Activated CD4-positive, alpha-beta T cell treated with anti-CD3 and anti-CD28 coated beads, Interleukin-2, amount 10 ng/mL, durations not matched to agents 7 days and 5 days (primary cell): ENCODE measurements at regions of chr16 and their contacts with region 1.

Region 1: GRCh38 chr16:50326949-50327402 is 41.8 kb downstream of the BRD7 start:
- DNase-seq: peak; percentile 87
- H3K4me3 Mint-ChIP-seq: no peak overlapping the region
- H3K27ac Mint-ChIP-seq: peak overlapping the region; percentile 81
- H3K4me1 Mint-ChIP-seq: peaks cover 69% of the 10 kb centered on the region
- H3K27me3 Mint-ChIP-seq: no peaks in the 10 kb centered on the region

Region 2: DNA sequence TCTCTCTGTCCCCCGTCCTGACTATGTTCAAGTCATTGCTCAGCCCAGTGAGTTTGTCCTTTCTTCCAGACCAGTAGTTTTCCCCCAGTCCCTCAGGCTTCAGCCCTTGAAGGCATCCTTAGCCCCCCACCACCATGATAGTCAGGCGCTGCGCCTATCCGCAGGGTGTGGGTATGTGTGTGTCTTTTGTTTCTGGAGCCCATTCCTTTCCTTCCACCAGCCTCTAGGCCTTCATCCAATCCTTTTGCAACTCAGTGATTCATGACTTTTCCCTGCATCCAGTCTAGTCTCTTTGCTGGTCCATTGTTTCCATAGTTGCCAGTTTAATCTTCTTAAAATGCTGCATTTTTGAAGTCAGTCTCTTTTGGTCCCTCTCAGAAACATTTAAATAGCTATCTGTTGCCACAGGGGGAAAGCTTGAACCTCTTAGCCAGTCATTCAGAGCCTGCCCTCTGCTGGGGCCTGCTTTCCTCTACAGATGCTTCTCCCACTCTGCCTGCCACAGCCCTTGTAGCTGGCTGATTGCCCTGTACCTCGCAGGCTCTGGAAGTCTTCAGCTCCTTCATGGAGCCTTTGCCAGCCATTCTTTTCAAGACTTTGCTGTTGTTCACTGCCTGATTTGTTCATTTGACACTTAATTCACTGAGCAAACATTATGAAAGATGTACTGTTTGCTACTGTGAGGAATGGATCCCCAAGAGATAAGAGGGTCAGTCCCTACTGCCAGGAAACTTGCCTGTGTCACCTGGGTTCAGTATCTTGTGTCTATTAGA is 116.5 kb before region 1 on chr16:
- CTCF ChIA-PET with region 1: interaction called, 11 read pairs
- POLR2A ChIA-PET with region 1: no interaction called
- DNase-seq: peak; percentile 81
- H3K4me3 Mint-ChIP-seq: no peak overlapping the region
- H3K27ac Mint-ChIP-seq: peak overlapping the region; percentile 62
- H3K4me1 Mint-ChIP-seq: peaks cover 38% of the 10 kb centered on the region
- H3K27me3 Mint-ChIP-seq: no peaks in the 10 kb centered on the region

Region 3: GRCh38 chr16:50281964-50282538 is 44.9 kb before region 1 on chr16:
- CTCF ChIA-PET with region 1: interaction called, 12 read pairs
- POLR2A ChIA-PET with region 1: no interaction called
- DNase-seq: peak; percentile 65
- H3K4me3 Mint-ChIP-seq: peak overlapping the region; percentile 61
- H3K27ac Mint-ChIP-seq: peak overlapping the region; percentile 80
- H3K4me1 Mint-ChIP-seq: peaks cover 90% of the 10 kb centered on the region
- H3K27me3 Mint-ChIP-seq: no peaks in the 10 kb centered on the region

Region 4: DNA sequence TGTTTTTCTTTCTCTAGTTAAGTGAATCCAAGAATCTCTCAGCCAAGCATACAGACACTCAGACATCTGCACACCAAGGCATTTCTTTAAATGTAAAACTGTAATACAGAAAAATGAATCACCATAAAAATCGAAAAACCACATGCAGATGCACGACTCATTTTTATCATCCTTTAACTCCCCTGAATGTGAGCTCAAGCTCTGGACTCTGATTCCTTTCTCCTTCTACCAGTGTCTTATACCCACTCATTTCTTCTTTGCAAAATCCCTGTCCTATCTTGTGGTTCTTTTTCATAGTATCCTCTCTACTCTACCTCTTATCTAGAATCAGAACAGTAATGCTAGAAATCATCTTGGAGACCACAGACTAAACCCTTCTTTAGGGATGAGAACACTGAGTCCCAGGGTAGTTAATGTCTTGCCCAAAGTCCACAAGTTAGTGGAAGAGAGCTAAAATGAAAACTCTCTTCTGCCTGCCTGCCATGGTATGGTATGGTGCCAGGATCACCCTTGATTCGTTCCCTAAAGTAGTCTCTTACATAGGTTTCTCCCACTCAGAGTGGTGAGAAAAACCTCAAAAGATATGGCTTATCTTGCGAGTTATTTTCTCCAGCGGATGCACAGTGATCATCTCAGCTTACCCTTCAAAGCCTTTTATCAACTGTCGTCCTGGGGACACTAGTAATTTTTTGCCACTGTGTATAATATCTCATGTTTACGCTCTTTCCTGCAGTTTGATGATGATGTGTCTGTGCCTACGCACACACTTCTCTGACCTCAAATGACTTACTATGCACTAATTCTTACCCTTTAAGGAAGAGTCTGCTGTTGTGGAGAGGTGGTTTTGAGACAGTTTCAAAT is 11.6 kb after region 1 on chr16:
- CTCF ChIA-PET with region 1: interaction called, 17 read pairs
- POLR2A ChIA-PET with region 1: no interaction called
- DNase-seq: peak; percentile 35
- H3K4me3 Mint-ChIP-seq: peak overlapping the region; percentile 60
- H3K27ac Mint-ChIP-seq: peak overlapping the region; percentile 95
- H3K4me1 Mint-ChIP-seq: peaks cover 73% of the 10 kb centered on the region
- H3K27me3 Mint-ChIP-seq: no peaks in the 10 kb centered on the region

Region 5: GRCh38 chr16:50368410-50369132 is 41.6 kb after region 1 on chr16 and contains the start of gene BRD7:
- CTCF ChIA-PET with region 1: interaction called, 11 read pairs
- POLR2A ChIA-PET with region 1: no interaction called
- DNase-seq: peak; percentile 59
- H3K4me3 Mint-ChIP-seq: peak within 1 kb of the TSS; percentile 87
- H3K27ac Mint-ChIP-seq: peak within 1 kb of the TSS; percentile 92
- H3K4me1 Mint-ChIP-seq: peaks cover 44% of the 10 kb centered on the region
- H3K27me3 Mint-ChIP-seq: no peaks in the 10 kb centered on the region
- total RNA-seq, gene BRD7: 102 to 105 TPM

Region 6: GRCh38 chr16:50644729-50645128 is 317.8 kb after region 1 on chr16:
- CTCF ChIA-PET with region 1: no interaction called
- POLR2A ChIA-PET with region 1: no interaction called
- DNase-seq: peak; percentile 48
- H3K4me3 Mint-ChIP-seq: no peak overlapping the region
- H3K27ac Mint-ChIP-seq: no peak overlapping the region
- H3K4me1 Mint-ChIP-seq: no peaks in the 10 kb centered on the region
- H3K27me3 Mint-ChIP-seq: no peaks in the 10 kb centered on the region